ACHN (cell line): ENCODE measurements at regions of chr7 and their contacts with region 1.

Region 1: GRCh38 chr7:27210441-27211083 is 10.7 kb upstream of the HOXA13 start:
- DNase-seq: peak; percentile 71

Region 2: DNA sequence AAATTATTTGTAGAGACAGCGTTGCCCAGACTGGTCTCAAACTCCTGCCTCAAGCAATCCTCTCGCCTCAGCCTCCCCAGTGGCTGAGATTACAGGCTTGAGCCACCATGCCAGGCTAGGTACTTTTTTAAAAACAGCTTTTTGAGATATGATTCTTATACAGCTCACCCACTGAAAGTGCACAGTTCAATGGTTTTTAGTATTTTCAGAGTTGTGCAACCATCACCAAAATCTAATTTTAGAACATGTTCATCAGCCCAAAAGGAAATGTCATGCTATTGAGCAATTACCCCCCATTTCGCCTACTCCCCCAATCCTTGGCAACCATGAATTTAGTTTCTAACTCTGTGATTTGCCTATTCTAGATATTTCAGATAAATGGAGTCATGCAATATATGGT is 105.7 kb after region 1 on chr7:
- in situ Hi-C with region 1: no loop called
- DNase-seq: no peak

Region 3: DNA sequence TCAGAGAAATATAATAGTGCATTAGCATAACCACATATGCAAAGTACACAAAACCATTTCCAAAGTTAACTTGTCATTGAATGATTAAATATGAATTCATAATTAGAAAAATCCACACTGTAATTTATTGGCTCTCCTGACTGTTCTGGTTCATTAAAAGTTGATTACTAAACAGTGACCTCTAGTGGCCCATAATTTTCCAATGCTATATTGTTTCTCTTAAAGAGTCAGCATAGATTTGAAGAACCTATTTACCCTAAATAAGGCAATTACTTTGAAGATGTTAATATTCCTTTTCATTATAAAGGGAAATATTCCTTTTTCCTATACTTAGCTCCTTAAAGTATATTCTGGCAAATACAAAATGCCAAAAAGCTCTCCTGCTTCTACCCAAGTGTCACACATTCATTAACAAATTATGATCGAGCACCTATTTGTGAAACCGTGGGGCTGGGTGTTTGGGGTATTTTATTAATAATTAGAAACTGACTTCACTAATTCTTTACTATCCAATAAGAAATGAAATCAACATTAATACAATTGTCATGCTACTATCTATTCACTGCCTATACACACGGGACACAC is 365.9 kb after region 1 on chr7:
- in situ Hi-C with region 1: loop called (anchors 25 kb)
- DNase-seq: peak; percentile 64